ENCODE measurements at regions of chr9 and their contacts with region 1.

Region 1: DNA sequence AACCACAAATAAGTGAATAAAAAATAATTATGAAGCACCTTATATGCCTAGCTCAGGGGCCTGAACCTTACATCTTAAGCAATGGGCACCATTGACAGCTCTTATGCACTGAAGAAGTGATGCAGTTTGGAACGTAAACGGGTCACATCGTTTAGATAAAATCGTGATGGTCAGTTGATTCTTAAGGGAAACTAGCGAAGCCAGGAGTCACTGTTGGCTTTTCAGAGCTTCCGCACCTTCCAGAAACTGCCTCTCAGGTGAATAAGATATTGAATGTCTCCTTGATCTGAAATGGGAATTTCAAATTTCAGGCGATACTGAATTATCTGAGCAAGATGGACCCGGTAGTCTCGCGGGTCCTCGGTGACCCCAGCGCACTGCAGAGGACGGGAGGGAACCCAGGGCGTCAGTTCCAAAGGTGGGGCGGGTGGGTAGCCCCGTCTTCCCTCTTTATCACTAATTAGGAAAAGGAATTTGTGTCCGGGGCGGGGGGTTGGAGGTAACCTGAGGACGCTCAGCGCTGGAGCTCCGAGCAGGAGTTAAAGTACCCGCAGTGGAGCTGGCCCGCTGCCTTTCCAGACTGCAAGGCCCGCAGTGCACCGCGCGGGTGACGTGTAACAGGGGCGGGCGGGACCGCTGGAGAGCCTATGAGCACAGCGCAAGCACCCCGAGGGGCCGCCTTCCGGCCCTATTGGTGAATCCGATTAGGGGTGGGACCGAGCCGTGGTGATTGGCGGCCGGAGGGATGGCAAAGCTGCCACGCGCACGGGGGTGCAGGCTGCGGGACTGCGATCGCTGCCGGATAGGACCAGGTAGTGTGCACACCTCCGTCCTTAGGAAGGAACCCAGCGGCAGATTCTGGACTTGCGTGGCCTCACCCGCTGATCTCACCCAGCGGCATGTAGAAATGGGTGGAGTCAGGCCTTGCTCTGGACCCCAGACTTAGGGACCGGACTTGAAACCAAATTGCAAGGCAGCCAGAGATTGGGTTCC is 19.7 kb upstream of the GARNL3 start:
- DNase-seq: peak; percentile 91
- ATAC-seq: peak; percentile 100
- H3K4me3 Mint-ChIP-seq: peak overlapping the region; percentile 90
- H3K27ac Mint-ChIP-seq: peak overlapping the region; percentile 86
- H3K4me1 Mint-ChIP-seq: peaks cover 11% of the 10 kb centered on the region
- H3K27me3 Mint-ChIP-seq: no peaks in the 10 kb centered on the region
- CTCF ChIP-seq: no peak

Region 2: DNA sequence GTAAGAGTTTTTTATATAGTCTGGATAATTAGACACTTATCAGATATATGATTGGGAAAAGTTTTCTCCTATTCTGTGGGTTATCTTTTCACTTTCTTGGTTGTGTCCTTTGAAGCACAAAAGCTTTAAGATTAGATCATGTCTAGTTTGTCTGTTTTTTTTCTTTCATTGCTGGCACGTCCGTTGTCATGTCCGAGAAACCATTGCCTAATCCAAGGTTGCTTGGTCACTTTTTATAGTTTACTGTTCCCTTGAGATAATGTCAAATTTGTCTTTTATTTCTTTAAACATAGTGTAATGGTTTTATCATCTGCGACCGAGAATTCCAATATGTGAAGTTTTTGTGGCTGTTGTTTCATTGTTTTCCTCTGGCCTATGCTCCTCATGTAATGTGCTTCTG is 48.4 kb after region 1 on chr9:
- CTCF ChIA-PET with region 1: no interaction called
- POLR2A ChIA-PET with region 1: interaction called, 10 read pairs
- intact Hi-C with region 1: no loop called
- DNase-seq: no peak
- ATAC-seq: no peak
- H3K4me3 Mint-ChIP-seq: no peak overlapping the region
- H3K27ac Mint-ChIP-seq: no peak overlapping the region
- H3K4me1 Mint-ChIP-seq: no peaks in the 10 kb centered on the region
- H3K27me3 Mint-ChIP-seq: no peaks in the 10 kb centered on the region
- CTCF ChIP-seq: no peak

Measured in activated B cell treated with CpG ODN at 0.5 μM for 24 hours (primary cell).